ENCODE measurements at regions of chr3 and their contacts with region 1.

Region 1: DNA sequence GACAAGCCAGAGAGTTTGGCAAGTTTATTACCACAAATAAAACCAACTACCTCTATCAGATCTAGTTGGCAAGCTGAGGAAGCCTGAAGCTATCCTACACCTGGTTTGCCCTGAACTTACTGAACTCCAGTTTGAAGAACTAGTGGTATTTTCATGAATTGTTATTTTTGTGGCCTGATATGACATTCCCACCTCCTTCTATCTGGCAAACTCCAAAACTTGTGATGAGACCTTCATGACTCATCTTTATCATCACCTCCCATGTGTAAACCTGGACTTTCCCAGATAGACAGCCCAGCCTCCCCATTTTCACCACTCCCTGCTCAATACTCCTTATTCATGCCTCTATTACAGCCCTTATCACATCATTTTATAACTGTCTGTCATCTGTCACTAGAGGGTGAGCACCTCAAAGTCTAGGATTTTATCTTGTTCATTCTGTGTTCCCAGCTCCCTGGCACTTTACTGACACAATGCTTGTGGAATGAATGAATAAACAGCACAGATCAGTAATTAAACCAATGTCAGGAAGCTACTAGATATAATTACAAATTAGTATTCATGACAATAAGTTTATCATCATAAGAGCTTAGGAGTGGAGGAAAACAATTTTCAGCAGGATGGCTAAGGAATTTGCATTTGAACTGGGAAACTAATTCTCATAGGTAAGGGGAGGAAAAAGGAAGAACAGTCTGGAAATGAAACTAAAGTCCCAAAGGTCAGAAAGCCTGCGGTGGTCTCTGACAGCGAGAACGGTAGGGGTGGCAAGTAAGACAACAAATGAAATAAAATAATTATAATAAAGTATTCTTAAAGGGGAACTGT is 13.2 kb upstream of the TRANK1 start:
- DNase-seq: no peak
- ATAC-seq: no peak
- H3K4me3 ChIP-seq: no peak overlapping the region
- H3K4me3 Mint-ChIP-seq: peak overlapping the region in 4 of 10 donors; percentile 2 to 21 (median 13)
- H3K27ac ChIP-seq: no peak overlapping the region
- H3K27ac Mint-ChIP-seq: peak overlapping the region in 8 of 9 donors; percentile 12 to 88 (median 45)
- H3K4me1 ChIP-seq: no peaks in the 10 kb centered on the region
- H3K4me1 Mint-ChIP-seq: peaks cover 2 to 12% (median 11%) of the 10 kb centered on the region in 7 donors
- H3K27me3 ChIP-seq: no peaks in the 10 kb centered on the region
- H3K27me3 Mint-ChIP-seq: peaks cover 0 to 3% (median 0%) of the 10 kb centered on the region in 5 donors

Region 2: GRCh38 chr3:35965908-35966307 is 992.2 kb before region 1 on chr3:
- CTCF ChIA-PET with region 1: no interaction called
- POLR2A ChIA-PET with region 1: no interaction called
- intact Hi-C with region 1: loop called in 1 of 2 experiments (anchors 5 kb)
- DNase-seq: peak in 2 of 9 donors; percentile 0 to 5
- ATAC-seq: no peak
- H3K4me3 ChIP-seq: no peak overlapping the region
- H3K4me3 Mint-ChIP-seq: no peak overlapping the region
- H3K27ac ChIP-seq: no peak overlapping the region
- H3K27ac Mint-ChIP-seq: no peak overlapping the region
- H3K4me1 ChIP-seq: no peaks in the 10 kb centered on the region
- H3K4me1 Mint-ChIP-seq: peaks cover 0 to 27% (median 5%) of the 10 kb centered on the region in 7 donors
- H3K27me3 ChIP-seq: no peaks in the 10 kb centered on the region
- H3K27me3 Mint-ChIP-seq: no peaks in the 10 kb centered on the region

Region 3: GRCh38 chr3:36777424-36778218 is 180.5 kb before region 1 on chr3:
- CTCF ChIA-PET with region 1: no interaction called
- POLR2A ChIA-PET with region 1: no interaction called
- intact Hi-C with region 1: no loop called
- DNase-seq: no peak
- ATAC-seq: no peak
- H3K4me3 ChIP-seq: no peak overlapping the region
- H3K4me3 Mint-ChIP-seq: no peak overlapping the region
- H3K27ac ChIP-seq: no peak overlapping the region
- H3K27ac Mint-ChIP-seq: no peak overlapping the region
- H3K4me1 ChIP-seq: no peaks in the 10 kb centered on the region
- H3K4me1 Mint-ChIP-seq: no peaks in the 10 kb centered on the region
- H3K27me3 ChIP-seq: no peaks in the 10 kb centered on the region
- H3K27me3 Mint-ChIP-seq: peaks cover 0 to 35% (median 11%) of the 10 kb centered on the region in 5 donors

Region 4: DNA sequence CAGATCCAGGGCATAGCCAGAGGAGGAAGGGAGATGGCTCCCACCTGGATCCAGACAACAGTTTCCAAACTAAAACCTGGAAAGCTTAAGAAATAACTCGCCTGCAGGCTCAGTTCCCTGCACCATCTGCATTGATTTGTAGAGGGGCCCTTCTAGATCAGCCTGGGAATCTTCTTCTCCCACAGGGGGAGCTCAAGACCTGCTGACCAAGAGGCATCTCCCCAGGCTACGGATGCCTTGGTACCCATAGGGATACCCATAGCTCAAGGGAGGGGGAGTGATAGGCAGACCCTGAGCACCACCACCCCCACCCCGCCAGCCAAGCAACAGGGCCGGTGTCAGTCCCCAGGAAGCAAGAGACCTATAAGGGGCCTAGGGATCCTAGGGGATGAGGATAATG is 165.7 kb before region 1 on chr3:
- CTCF ChIA-PET with region 1: no interaction called
- POLR2A ChIA-PET with region 1: no interaction called
- intact Hi-C with region 1: loop called (anchors 1 kb)
- DNase-seq: peak in 1 of 9 donors; percentile 12
- ATAC-seq: no peak
- H3K4me3 ChIP-seq: no peak overlapping the region
- H3K4me3 Mint-ChIP-seq: no peak overlapping the region
- H3K27ac ChIP-seq: no peak overlapping the region
- H3K27ac Mint-ChIP-seq: no peak overlapping the region
- H3K4me1 ChIP-seq: no peaks in the 10 kb centered on the region
- H3K4me1 Mint-ChIP-seq: peaks cover 0 to 2% (median 0%) of the 10 kb centered on the region in 7 donors
- H3K27me3 ChIP-seq: no peaks in the 10 kb centered on the region
- H3K27me3 Mint-ChIP-seq: peaks cover 5 to 32% (median 12%) of the 10 kb centered on the region in 5 donors

Region 5: DNA sequence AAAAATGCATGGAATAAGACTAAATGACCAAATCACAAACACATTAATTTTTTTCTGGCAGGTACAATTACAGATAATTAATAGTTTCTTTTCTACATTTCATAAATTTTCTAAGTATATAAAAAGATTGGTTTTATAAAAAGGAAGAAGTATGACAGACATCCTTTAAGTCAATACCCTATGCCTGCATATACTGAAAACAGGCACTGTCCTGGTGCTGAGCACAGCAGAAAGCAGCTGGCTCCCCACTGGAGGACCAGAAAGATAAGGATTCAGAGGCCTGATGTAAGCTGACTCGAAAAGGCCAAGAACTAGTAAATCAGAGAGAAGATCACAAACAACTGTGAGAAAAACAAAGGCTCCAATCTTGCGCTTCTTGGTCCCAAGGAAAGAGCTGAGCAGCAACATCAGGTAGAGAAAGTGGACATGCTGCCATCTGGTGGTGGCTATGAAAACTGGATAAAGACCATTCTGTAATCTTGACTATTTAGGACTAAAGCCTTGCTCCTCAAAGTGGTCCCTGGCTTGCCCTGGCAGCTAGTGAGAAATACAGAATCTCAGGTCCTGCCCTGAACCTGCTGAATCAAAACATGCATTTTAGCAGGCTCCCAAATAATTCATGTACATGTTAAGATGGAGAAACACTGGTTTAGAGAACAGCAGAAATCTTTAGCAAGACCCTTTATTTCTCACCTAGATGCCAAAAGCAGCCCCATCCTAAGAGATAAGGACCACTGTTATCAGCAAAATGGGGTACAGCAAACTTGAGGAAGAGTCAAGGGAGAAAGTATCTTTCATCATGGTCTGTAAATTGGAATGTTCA is 89.2 kb before region 1 on chr3:
- CTCF ChIA-PET with region 1: interaction called, 10 read pairs
- POLR2A ChIA-PET with region 1: no interaction called
- intact Hi-C with region 1: loop called (anchors 1 to 2 kb)
- DNase-seq: peak in 8 of 9 donors; percentile 27 to 55 (median 46)
- ATAC-seq: peak; percentile 88
- H3K4me3 ChIP-seq: no peak overlapping the region
- H3K4me3 Mint-ChIP-seq: peak overlapping the region in 1 of 10 donors; percentile 53
- H3K27ac ChIP-seq: no peak overlapping the region
- H3K27ac Mint-ChIP-seq: peak overlapping the region in 5 of 9 donors; percentile 26 to 81 (median 63)
- H3K4me1 ChIP-seq: peaks cover 5 to 10% of the 10 kb centered on the region in 2 donors
- H3K4me1 Mint-ChIP-seq: peaks cover 12 to 43% (median 36%) of the 10 kb centered on the region in 7 donors
- H3K27me3 ChIP-seq: no peaks in the 10 kb centered on the region
- H3K27me3 Mint-ChIP-seq: peaks cover 0 to 4% (median 0%) of the 10 kb centered on the region in 5 donors

Region 6: DNA sequence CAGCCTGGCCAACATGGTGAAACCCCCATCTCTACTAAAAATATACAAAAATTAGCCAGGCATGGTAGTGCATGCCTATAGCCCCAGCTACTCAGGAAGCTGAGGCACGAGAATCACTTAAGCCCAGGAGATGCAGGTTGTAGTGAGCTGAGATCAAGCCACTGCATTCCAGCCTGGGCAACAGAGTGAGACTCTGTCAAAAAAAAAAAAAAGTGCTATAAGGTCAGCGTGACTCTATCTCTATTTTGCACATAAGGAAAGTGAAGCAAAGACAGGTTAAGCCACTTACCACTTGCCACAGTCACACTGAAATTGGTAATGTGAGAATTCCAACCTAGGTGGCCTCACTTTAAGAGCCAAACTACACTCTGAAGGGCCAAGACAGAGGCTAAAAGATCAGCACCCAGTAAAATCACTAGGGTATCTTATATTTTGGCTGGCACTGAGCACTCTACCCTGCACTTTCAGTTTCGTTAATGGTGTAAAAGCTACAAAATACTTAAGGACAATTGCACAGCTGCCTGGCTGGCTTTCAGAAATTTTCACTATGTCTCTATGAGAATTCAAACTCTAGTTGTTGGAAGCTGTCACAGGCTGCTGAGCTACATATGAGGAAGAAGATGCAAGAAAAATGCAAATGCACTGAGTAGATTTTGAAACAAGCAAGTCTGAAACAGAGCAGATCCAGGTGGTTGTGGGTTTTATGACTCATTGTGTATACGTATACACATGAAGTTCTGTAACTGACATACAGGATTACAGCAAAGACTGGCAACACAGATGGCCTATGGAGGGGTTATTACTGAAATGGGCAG is 45.9 kb before region 1 on chr3:
- CTCF ChIA-PET with region 1: interaction called, 27 read pairs
- POLR2A ChIA-PET with region 1: interaction called, 5 read pairs
- intact Hi-C with region 1: loop called (anchors 1 kb)
- DNase-seq: peak in 7 of 9 donors; percentile 31 to 80 (median 50)
- ATAC-seq: peak; percentile 88
- H3K4me3 ChIP-seq: peak overlapping the region; percentile 47
- H3K4me3 Mint-ChIP-seq: peak overlapping the region; percentile 5 to 81 (median 74)
- H3K27ac ChIP-seq: peak overlapping the region; percentile 68
- H3K27ac Mint-ChIP-seq: peak overlapping the region; percentile 58 to 95 (median 84)
- H3K4me1 ChIP-seq: peaks cover 24 to 28% of the 10 kb centered on the region in 2 donors
- H3K4me1 Mint-ChIP-seq: peaks cover 24 to 48% (median 46%) of the 10 kb centered on the region in 7 donors
- H3K27me3 ChIP-seq: no peaks in the 10 kb centered on the region
- H3K27me3 Mint-ChIP-seq: peaks cover 0 to 2% (median 0%) of the 10 kb centered on the region in 5 donors

Region 7: GRCh38 chr3:37210230-37210629 is 252.2 kb after region 1 on chr3:
- CTCF ChIA-PET with region 1: no interaction called
- POLR2A ChIA-PET with region 1: no interaction called
- intact Hi-C with region 1: loop called in 1 of 2 experiments (anchors 2 kb)
- DNase-seq: no peak
- ATAC-seq: no peak
- H3K4me3 ChIP-seq: no peak overlapping the region
- H3K4me3 Mint-ChIP-seq: no peak overlapping the region
- H3K27ac ChIP-seq: no peak overlapping the region
- H3K27ac Mint-ChIP-seq: no peak overlapping the region
- H3K4me1 ChIP-seq: no peaks in the 10 kb centered on the region
- H3K4me1 Mint-ChIP-seq: peaks cover 0 to 8% (median 0%) of the 10 kb centered on the region in 7 donors
- H3K27me3 ChIP-seq: no peaks in the 10 kb centered on the region
- H3K27me3 Mint-ChIP-seq: peaks cover 0 to 3% (median 0%) of the 10 kb centered on the region in 5 donors

Measured in naive thymus-derived CD4-positive, alpha-beta T cell (primary cell).